PC-3 (cell line): ENCODE measurements at regions of chr1 and their contacts with region 1.

Region 1: DNA sequence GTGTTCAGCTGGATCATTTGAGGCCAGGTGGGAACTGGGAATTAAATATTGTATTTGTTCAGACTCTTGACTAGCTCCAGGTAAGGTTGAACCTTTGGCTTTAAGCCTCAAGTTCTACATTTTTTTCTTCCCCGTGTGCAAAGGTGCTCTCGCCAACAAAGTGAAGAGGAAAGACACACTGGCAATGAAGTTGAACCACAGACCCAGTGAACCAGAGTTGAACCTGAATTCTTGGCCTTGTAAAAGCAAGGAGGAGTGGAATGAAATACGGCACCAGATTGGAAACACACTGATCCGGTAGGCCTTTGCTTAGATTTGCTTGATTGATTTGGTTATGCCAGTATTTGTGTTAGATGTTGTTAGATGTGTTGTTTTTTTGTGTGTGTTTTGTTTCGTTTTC is 25.5 kb upstream of the RCC1 start:
- DNase-seq: no peak
- ATAC-seq: no peak
- H3K4me3 ChIP-seq: no peak overlapping the region
- H3K27ac ChIP-seq: no peak overlapping the region
- H3K4me1 ChIP-seq: no peaks in the 10 kb centered on the region
- H3K27me3 ChIP-seq: no peaks in the 10 kb centered on the region
- CTCF ChIP-seq: no peak

Region 2: DNA sequence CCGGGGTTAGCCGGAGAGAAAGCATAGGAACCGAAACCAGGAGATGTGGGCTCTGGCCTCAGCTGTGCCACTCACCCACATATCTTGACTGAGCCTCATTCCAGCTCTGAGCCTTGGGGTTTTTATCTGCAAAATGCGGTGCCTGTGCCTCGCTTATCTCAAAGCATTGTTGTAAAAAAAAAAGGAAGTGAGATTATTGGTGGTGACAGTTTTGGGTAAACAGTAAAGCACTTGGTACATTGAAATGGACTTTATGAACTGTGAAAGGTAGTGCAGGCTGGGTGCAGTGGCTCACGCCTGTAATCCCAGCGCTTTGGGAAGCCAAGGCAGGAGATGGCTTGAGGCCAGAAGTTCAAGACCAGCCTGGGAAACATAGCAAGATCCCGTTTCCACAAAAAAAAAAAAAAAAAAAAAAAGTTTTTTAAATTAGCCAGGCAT is 307.6 kb before region 1 on chr1:
- CTCF ChIA-PET with region 1: no interaction called
- POLR2A ChIA-PET with region 1: no interaction called
- intact Hi-C with region 1: no loop called
- DNase-seq: no peak
- ATAC-seq: no peak
- H3K4me3 ChIP-seq: no peak overlapping the region
- H3K27ac ChIP-seq: no peak overlapping the region
- H3K4me1 ChIP-seq: peaks cover 14% of the 10 kb centered on the region
- H3K27me3 ChIP-seq: no peaks in the 10 kb centered on the region
- CTCF ChIP-seq: no peak

Region 3: DNA sequence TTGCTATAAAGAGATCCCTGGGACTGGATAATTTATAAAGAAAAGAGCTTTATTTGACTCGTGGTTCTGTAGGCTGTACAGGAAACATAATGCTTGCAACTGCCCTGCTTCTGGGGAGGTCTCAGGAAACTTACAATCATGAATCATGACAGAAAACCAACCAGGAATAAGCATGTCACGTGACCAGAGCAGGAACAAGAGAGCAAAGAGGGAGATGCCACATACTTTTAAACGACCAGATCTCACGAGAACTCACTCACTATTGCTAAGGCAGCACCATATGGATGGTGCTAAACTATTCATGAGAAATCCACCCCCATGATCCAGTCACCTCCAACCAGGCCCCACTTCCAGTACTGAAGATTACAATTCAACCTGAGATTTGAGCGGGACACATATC is 24.2 kb before region 1 on chr1:
- CTCF ChIA-PET with region 1: no interaction called
- POLR2A ChIA-PET with region 1: interaction called, 12 read pairs
- intact Hi-C with region 1: no loop called
- DNase-seq: no peak
- ATAC-seq: peak; percentile 60
- H3K4me3 ChIP-seq: no peak overlapping the region
- H3K27ac ChIP-seq: no peak overlapping the region
- H3K4me1 ChIP-seq: peaks cover 14% of the 10 kb centered on the region; the same call in 1 of the 2 replicates
- H3K27me3 ChIP-seq: no peaks in the 10 kb centered on the region
- CTCF ChIP-seq: no peak

Region 4: GRCh38 chr1:29043274-29043965 is 563.1 kb after region 1 on chr1:
- CTCF ChIA-PET with region 1: no interaction called
- POLR2A ChIA-PET with region 1: no interaction called
- intact Hi-C with region 1: no loop called
- DNase-seq: no peak
- ATAC-seq: no peak
- H3K4me3 ChIP-seq: no peak overlapping the region
- H3K27ac ChIP-seq: no peak overlapping the region
- H3K4me1 ChIP-seq: no peaks in the 10 kb centered on the region
- H3K27me3 ChIP-seq: no peaks in the 10 kb centered on the region
- CTCF ChIP-seq: no peak